MCF 10A (cell line): ENCODE measurements at regions of chr2 and their contacts with region 1.

Region 1: GRCh38 chr2:180125245-180125962 is 118.3 kb upstream of the CWC22 start:
- DNase-seq: peak; percentile 88
- H3K4me3 Mint-ChIP-seq: no peak overlapping the region
- H3K27ac Mint-ChIP-seq: no peak overlapping the region
- H3K4me1 Mint-ChIP-seq: peaks cover 10% of the 10 kb centered on the region
- H3K27me3 Mint-ChIP-seq: no peaks in the 10 kb centered on the region
- CTCF ChIP-seq: peak; percentile 46

Region 2: GRCh38 chr2:179711375-179711774 is 414.0 kb before region 1 on chr2:
- CTCF ChIA-PET with region 1: no interaction called
- POLR2A ChIA-PET with region 1: no interaction called
- intact Hi-C with region 1: no loop called
- DNase-seq: no peak
- H3K4me3 Mint-ChIP-seq: no peak overlapping the region
- H3K27ac Mint-ChIP-seq: peak overlapping the region; percentile 39
- H3K4me1 Mint-ChIP-seq: peaks cover 14% of the 10 kb centered on the region
- H3K27me3 Mint-ChIP-seq: no peaks in the 10 kb centered on the region
- CTCF ChIP-seq: no peak

Region 3: DNA sequence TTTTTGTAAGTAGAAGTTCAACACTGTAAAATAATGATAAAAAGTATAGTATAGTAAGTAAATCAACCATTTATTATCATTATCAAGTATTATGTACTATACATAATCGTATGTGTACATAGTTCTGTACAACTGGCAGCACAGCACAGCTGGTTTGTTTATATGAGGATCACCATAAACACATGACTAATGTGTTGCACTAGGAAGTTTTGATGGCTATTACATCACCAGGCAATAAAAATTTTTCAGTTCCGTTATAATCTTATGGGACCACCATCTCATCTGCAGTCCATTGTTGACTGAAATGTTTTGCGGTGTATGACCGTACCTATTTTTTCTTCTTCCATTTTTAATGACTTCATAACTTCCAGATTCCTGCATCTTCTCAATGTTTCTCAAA is 224.7 kb before region 1 on chr2:
- CTCF ChIA-PET with region 1: no interaction called
- POLR2A ChIA-PET with region 1: no interaction called
- intact Hi-C with region 1: no loop called
- DNase-seq: no peak
- H3K4me3 Mint-ChIP-seq: no peak overlapping the region
- H3K27ac Mint-ChIP-seq: no peak overlapping the region
- H3K4me1 Mint-ChIP-seq: no peaks in the 10 kb centered on the region
- H3K27me3 Mint-ChIP-seq: no peaks in the 10 kb centered on the region
- CTCF ChIP-seq: no peak

Region 4: DNA sequence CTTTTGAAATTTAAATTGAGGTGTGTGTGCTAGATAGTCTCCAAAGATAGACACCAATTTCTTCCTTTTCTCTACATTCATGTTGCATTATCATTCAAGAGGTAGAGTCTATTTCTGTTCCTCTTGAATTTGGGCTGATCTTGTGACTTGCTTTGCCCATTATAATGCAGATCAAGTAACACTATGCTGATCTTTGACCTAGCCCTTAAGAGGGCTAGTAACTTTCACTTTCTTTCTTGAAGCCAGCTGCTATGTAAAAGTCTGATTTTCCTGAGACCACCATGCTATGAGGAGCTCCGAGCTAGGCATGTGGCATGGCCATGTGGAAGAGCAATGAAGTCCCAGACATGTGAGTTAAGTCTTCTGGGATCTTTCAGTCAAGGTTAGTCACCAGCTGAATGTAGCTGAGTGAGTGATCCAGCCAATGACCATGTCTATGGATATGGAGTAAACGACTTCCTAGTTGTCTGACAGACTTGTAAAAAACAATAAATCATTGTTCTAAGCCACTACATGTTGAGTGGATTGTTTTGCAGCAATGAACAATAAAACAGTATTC is 71.1 kb after region 1 on chr2:
- CTCF ChIA-PET with region 1: no interaction called
- POLR2A ChIA-PET with region 1: no interaction called
- intact Hi-C with region 1: no loop called
- DNase-seq: no peak
- H3K4me3 Mint-ChIP-seq: no peak overlapping the region
- H3K27ac Mint-ChIP-seq: no peak overlapping the region
- H3K4me1 Mint-ChIP-seq: no peaks in the 10 kb centered on the region
- H3K27me3 Mint-ChIP-seq: no peaks in the 10 kb centered on the region
- CTCF ChIP-seq: no peak

Region 5: DNA sequence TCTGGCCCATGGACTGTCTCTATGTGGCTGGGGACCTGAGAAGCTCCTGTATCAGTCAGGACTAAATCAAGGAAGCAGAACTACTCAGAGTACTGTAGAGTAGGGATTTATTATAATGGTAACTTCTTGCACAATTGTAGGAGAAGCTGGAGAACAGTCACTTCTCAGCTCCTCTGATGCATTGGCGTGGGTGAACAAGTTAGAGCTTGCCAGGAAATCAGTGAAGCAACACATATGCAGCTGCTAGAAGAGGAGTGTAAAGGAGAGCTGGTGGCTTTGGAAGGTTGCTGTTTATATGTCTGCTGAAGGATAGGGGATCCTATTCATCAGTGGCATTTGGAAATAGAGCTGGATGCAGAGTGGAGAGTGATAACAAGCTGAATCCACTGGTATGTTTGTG is 97.2 kb after region 1 on chr2:
- CTCF ChIA-PET with region 1: interaction called, 12 read pairs
- POLR2A ChIA-PET with region 1: no interaction called
- intact Hi-C with region 1: no loop called
- DNase-seq: peak; percentile 95
- H3K4me3 Mint-ChIP-seq: peak overlapping the region; percentile 61
- H3K27ac Mint-ChIP-seq: peak overlapping the region; percentile 61
- H3K4me1 Mint-ChIP-seq: peaks cover 20% of the 10 kb centered on the region
- H3K27me3 Mint-ChIP-seq: no peaks in the 10 kb centered on the region
- CTCF ChIP-seq: no peak

Region 6: DNA sequence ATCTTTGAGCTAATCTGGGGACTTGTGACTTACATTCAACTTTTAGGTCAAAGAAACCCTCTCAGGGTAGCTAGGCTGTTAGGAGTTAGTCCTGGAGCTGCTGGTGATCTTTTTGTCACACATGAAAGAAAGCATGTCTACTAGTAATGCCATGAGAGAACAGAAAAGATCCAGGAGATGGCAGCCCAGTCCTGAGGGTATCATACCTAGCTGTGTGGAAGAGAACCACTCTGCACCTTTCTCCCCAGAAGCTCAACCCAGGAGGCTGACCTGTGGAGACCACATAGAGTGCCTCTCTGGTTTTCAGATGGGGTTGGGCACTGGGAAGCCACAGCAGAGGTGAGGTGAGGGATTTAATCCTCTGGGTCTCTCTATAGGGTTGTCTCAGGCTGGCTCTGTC is 394.8 kb after region 1 on chr2:
- CTCF ChIA-PET with region 1: interaction called, 25 read pairs
- POLR2A ChIA-PET with region 1: no interaction called
- intact Hi-C with region 1: no loop called
- DNase-seq: peak; percentile 23
- H3K4me3 Mint-ChIP-seq: no peak overlapping the region
- H3K27ac Mint-ChIP-seq: peak overlapping the region; percentile 57
- H3K4me1 Mint-ChIP-seq: peaks cover 29% of the 10 kb centered on the region
- H3K27me3 Mint-ChIP-seq: no peaks in the 10 kb centered on the region
- CTCF ChIP-seq: no peak

Region 7: DNA sequence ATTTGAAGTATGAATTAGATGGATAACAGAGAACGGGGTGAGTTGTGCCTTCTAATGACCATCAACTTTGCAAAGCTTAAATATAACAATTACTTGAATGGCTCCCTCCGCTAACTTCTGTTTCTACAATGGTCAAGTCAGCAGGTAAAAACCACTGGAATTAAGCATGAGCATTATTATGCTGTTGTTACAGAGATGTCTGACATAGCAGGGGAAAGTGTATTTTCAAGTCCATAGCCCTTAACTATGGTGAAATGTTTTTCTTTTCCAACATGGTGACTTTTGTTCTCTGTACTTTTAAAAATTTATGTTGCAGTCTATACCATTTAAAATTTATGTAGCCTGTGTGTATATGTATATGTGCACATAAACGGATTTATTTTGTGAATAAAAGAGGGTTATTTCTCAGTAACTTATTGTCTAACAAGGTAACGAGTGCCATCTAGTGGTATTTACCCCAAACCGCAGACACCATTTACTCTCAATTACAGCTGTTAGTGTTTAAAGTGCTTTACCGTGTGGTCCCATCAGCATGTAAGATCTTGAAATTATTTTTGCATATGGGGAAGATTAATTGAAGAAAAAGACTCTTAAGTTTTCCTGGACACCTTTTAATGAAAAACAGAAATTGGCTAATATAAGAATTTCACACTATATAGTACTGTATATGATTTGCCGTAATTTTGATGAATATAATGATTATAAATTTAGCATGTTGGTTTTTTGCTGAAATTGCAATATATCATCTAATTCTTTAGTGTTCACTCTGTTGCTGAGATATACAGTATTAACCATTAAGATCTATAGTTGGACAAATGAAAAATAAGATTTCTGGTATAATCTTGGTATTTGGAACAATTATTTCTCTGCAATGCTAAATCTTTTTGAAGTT is 933.2 kb after region 1 on chr2:
- CTCF ChIA-PET with region 1: interaction called, 23 read pairs
- POLR2A ChIA-PET with region 1: interaction called, 6 read pairs
- intact Hi-C with region 1: loop called (anchors 1 kb)
- DNase-seq: peak; percentile 53
- H3K4me3 Mint-ChIP-seq: no peak overlapping the region
- H3K27ac Mint-ChIP-seq: no peak overlapping the region
- H3K4me1 Mint-ChIP-seq: peaks cover 16% of the 10 kb centered on the region
- H3K27me3 Mint-ChIP-seq: no peaks in the 10 kb centered on the region
- CTCF ChIP-seq: peak; percentile 80

Region 8: DNA sequence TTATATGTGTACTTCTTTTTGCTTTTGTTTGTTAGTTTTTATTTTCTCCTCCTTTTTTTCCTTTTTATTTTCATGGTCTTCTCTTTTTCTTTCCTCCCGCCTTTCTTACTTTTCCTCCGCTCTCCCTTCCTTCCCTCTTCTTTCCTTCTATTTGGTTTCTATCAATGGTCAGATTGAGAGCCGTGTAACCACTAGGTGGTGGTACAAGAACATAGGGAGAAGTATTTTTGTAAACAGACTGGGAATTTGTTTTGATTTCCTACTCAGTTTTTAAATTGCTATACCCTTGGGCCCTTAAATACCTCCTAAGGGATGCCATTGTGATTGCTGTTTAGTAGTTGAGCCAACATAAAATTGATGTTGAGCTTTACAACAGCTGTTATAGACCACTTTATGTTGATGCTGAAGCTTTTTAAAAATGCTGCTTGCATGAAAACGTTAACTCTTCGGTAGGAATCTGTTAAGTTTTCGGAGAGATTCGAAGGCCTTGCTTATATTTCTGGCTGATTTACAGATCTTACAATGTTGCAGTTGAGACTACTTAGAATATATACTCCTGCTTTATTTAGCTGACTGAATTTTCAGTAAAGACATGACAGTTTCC is 979.2 kb after region 1 on chr2:
- CTCF ChIA-PET with region 1: interaction called, 4 read pairs
- POLR2A ChIA-PET with region 1: no interaction called
- intact Hi-C with region 1: loop called (anchors 1 kb)
- DNase-seq: peak; percentile 63
- H3K4me3 Mint-ChIP-seq: no peak overlapping the region
- H3K27ac Mint-ChIP-seq: no peak overlapping the region
- H3K4me1 Mint-ChIP-seq: peaks cover 8% of the 10 kb centered on the region
- H3K27me3 Mint-ChIP-seq: no peaks in the 10 kb centered on the region
- CTCF ChIP-seq: peak; percentile 70

Region 9: DNA sequence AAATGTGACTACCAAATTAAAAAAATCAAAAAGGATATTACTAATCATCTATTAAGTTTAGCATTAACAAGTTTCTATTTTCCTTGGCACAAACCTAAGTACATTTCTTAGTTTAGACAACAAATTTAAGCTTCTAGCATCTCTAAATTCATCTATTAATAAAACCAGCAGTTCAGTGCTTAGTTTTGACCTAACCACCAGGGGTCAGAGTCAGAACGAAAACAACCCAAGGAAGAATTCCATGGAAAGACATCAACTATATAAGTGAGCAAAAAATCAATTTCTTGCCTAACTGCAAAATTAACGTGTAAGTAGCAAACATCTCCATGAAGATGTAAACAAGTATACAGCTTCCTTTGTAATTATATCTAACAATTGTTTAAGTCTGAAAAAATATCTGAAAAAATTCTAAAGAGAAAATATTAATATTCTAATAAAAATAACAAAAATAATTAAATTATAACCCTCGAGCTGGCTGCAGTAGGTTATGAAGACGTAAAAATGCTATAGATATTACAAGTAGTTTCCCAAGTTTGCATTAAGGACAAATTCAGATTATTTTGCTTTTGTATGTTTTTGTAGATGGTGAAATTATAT is 1447.8 kb after region 1 on chr2:
- CTCF ChIA-PET with region 1: interaction called, 5 read pairs
- POLR2A ChIA-PET with region 1: no interaction called
- intact Hi-C with region 1: loop called (anchors 2 kb)
- DNase-seq: peak; percentile 53
- H3K4me3 Mint-ChIP-seq: no peak overlapping the region
- H3K27ac Mint-ChIP-seq: no peak overlapping the region
- H3K4me1 Mint-ChIP-seq: no peaks in the 10 kb centered on the region
- H3K27me3 Mint-ChIP-seq: no peaks in the 10 kb centered on the region
- CTCF ChIP-seq: peak; percentile 37

Region 10: DNA sequence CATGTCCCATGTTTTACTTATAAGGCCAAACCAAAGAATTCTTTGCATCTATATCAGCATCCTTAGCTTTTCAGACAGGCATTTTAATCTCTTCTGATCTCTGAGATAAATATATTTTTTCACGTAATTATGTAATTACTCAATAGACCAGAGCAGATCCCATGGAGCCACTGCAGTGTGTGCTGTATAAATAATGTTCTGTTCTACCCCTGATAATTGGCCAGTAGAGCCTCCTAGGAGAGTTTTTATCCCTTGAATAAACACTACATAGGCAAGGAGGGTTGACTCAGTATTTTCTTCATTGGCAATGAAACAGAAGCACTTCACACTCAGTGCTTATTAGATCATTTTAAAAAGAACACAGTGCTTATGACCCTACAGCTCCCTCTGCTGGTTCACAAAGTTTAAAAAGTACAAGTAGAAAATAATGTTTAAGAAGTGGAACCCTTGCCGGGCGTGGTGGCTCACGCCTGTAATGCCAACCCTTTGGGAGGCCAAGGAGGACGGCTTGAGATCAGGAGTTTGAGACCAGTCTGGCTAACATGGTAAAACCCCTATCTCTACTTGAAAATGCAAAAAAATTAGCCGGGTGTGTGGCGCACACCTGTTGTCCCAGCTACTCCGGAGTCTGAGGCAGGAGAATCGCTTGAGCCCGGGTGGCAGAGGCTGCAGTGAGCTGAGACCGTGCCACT is 1952.2 kb after region 1 on chr2:
- CTCF ChIA-PET with region 1: interaction called, 4 read pairs
- POLR2A ChIA-PET with region 1: no interaction called
- intact Hi-C with region 1: loop called (anchors 10 kb)
- DNase-seq: peak; percentile 85
- H3K4me3 Mint-ChIP-seq: no peak overlapping the region
- H3K27ac Mint-ChIP-seq: no peak overlapping the region
- H3K4me1 Mint-ChIP-seq: no peaks in the 10 kb centered on the region
- H3K27me3 Mint-ChIP-seq: no peaks in the 10 kb centered on the region
- CTCF ChIP-seq: peak; percentile 70